Endothelial cell of umbilical vein (primary cell): ENCODE measurements at regions of chr16 and their contacts with region 1.

Region 1: DNA sequence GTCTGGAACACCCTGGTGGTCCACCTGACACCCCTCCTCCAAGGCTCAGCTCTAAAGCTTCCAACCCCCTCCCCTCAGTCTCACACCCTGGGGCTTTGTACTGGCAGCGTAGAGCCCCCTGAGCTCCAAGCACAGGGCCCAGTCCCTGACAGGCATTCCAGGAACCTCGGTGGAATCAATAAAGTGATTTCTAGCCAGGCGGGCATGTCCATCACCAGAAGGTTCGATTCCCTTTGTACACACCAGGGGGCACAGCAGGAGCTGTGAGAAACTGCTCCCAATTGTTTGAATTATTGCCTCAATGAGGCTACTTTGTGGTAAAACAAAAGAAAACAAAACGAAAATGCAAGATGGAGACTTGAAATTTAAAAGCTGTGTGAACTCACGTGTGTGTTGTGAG is 51.8 kb downstream of the SMPD3 start:
- DNase-seq: peak; percentile 43
- H3K4me3 ChIP-seq: no peak overlapping the region
- H3K27ac ChIP-seq: no peak overlapping the region
- H3K4me1 ChIP-seq: no peaks in the 10 kb centered on the region
- H3K27me3 ChIP-seq: peaks cover 6 to 8% of the 10 kb centered on the region in 2 experiments
- CTCF ChIP-seq: peak; percentile 57 to 70
- POLR2A ChIP-seq: no peak

Region 2: DNA sequence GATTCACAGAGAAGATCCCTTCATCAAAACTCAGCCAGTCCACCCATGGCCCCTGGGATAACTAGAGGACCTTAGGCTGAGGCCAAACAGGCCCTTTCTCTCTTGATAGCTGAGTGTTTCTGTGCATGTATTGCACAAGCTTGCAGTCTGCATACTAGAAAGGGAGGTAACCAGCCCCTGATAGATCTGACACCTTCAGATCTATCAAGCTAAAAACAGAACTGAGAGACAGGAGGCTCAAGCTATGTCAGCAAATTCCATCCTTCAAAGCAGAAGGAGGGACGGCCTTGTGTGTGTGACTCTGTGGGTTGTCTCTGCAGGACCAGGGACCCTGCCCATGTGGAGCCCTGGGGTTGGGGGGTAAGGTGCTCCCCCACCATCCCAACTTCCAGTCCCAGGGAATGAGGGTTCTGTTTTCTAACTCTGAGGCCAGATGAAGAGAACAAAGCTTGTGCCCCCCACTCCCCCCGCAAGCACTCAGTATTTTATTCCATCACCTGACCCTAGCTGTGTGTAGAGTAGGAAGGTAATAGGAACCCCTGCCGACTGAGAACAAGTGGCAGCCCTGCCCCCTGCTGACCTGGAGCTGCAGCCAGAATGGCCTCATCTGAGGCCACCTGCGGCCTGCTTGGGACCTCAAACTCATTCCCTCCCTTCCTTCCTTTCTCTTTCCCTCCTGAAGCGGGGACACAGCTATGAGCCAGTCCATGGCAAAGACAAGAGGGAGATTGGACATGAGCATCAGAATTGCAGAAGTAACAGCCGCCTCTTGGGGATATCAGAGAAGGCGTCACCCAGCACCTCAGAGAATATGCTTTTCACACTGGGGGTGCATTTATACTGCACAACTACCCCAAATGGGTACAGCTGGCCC is 12.0 kb before region 1 on chr16:
- CTCF ChIA-PET with region 1: interaction called, 22 read pairs
- POLR2A ChIA-PET with region 1: no interaction called
- dilution Hi-C with region 1: no loop called
- intact Hi-C with region 1: no loop called
- DNase-seq: no peak
- H3K4me3 ChIP-seq: no peak overlapping the region
- H3K27ac ChIP-seq: no peak overlapping the region
- H3K4me1 ChIP-seq: no peaks in the 10 kb centered on the region
- H3K27me3 ChIP-seq: no peaks in the 10 kb centered on the region
- CTCF ChIP-seq: no peak
- POLR2A ChIP-seq: no peak

Region 3: DNA sequence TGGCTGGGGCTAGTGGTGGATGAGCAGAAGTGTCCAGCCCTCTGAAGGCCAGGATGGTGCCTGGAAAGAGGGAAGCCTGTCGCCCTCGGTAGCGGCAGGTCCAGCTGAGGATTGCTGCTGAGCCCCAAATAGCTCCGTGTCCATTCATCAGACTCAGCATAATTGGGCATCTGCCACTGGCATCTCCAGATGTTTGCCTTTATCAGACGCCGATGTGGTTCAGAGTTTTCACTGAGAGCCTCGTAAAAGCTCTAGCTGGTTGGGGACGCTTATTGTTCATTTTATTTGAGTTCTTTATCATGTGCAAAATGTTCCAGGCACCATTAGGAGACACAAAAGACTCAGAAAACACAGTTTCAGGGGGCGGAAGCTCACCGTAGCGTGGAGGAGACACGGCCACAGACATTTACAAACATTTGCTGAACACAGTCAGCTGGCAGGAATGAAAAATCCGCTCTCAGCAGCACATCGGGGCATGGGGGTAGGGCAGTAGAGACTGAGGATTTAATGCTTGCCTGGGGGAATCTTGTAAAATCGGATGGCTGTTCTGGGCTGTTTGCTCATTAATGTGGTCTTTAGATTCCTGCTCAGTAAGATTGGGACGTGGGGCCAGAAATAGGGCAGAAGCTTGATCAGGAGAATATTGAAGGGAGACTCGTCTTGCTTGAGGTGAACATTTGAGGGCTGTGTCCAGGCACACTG is 10.1 kb after region 1 on chr16:
- CTCF ChIA-PET with region 1: interaction called, 12 read pairs
- POLR2A ChIA-PET with region 1: no interaction called
- dilution Hi-C with region 1: no loop called
- intact Hi-C with region 1: no loop called
- DNase-seq: no peak
- H3K4me3 ChIP-seq: no peak overlapping the region
- H3K27ac ChIP-seq: no peak overlapping the region
- H3K4me1 ChIP-seq: no peaks in the 10 kb centered on the region
- H3K27me3 ChIP-seq: peaks cover 3 to 15% of the 10 kb centered on the region in 2 experiments
- CTCF ChIP-seq: no peak
- POLR2A ChIP-seq: no peak

Region 4: GRCh38 chr16:68506331-68507053 is 110.0 kb after region 1 on chr16:
- CTCF ChIA-PET with region 1: interaction called, 44 read pairs
- POLR2A ChIA-PET with region 1: no interaction called
- dilution Hi-C with region 1: no loop called
- intact Hi-C with region 1: loop called (anchors 1 kb)
- DNase-seq: no peak
- H3K4me3 ChIP-seq: no peak overlapping the region
- H3K27ac ChIP-seq: no peak overlapping the region
- H3K4me1 ChIP-seq: no peaks in the 10 kb centered on the region
- H3K27me3 ChIP-seq: no peaks in the 10 kb centered on the region
- CTCF ChIP-seq: no peak
- POLR2A ChIP-seq: no peak

Region 5: GRCh38 chr16:68512183-68512582 is 115.7 kb after region 1 on chr16:
- CTCF ChIA-PET with region 1: interaction called, 44 read pairs
- POLR2A ChIA-PET with region 1: no interaction called
- dilution Hi-C with region 1: no loop called
- intact Hi-C with region 1: loop called (anchors 1 kb)
- DNase-seq: no peak
- H3K4me3 ChIP-seq: no peak overlapping the region
- H3K27ac ChIP-seq: no peak overlapping the region
- H3K4me1 ChIP-seq: no peaks in the 10 kb centered on the region
- H3K27me3 ChIP-seq: no peaks in the 10 kb centered on the region
- CTCF ChIP-seq: no peak
- POLR2A ChIP-seq: no peak

Region 6: DNA sequence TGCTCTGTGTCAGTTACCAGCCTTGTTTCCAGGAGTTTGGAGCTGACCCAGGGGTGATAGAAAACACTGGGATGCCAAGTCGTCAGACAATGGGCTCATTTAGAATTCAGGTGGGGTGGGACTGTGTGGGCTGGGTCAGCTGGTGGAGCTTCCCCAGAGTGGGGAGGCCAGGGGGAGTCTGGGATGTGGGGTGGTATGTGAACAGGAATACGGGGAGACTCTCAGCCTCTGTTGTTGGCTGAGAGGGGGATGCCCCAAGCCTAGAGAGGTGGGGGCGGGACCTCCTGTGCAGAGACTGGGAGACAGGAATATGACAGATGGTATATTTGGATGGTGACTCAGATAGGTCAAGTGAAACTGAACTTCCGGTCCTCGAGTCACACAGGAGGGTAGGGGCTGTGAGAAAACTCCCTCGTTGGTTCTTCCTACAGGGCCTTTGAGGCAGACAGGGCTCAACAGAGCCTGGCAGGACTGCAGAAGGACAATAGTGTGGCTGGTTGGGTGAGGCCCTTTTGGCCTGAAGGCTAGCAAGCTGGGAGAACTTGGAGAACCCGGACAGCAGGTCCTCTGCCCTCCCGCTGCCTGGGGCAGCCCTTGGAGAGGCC is 364.3 kb after region 1 on chr16:
- CTCF ChIA-PET with region 1: no interaction called
- POLR2A ChIA-PET with region 1: no interaction called
- dilution Hi-C with region 1: no loop called
- intact Hi-C with region 1: no loop called
- DNase-seq: no peak
- H3K4me3 ChIP-seq: no peak overlapping the region
- H3K27ac ChIP-seq: no peak overlapping the region
- H3K4me1 ChIP-seq: no peaks in the 10 kb centered on the region
- H3K27me3 ChIP-seq: peaks cover 0 to 3% of the 10 kb centered on the region in 2 experiments
- CTCF ChIP-seq: no peak
- POLR2A ChIP-seq: no peak